GM23248 (cell line): ENCODE measurements at regions of chr1 and their contacts with region 1.

Region 1: DNA sequence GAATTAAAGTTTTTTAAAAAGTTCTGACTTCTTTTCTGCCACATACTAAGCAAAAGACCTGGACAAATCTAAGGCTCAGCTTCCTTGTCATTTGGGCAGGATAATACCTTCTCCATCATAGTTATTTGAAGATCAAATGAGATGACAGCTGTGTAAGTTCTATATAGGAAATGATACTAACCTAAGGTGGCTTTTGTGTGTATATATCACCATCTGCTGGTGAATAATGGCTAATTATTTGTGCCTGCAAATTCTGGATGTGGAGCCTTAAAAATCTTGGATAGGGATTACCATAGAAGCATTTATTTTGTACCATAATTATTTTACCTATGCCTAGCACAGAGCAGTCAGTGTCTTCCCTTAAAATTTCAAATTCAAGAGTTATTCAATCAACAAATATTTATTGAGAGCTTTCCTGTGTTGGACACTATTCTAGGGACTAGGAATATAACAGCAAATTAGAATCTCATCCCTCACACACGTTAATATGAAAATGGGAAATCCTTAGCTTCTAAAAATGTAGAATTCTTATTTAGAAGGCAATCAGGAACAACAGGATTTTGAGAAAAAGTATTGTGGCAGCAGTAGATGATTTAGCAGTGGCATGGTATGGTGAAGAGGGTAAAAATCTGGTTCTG is 89.8 kb downstream of the TMEM200B start:
- DNase-seq: peak; percentile 67
- H3K4me3 ChIP-seq: no peak overlapping the region
- H3K27ac ChIP-seq: no peak overlapping the region
- H3K4me1 ChIP-seq: no peaks in the 10 kb centered on the region
- H3K27me3 ChIP-seq: no peaks in the 10 kb centered on the region

Region 2: GRCh38 chr1:28886731-28887418 is 147.1 kb before region 1 on chr1:
- in situ Hi-C with region 1: loop called (anchors 5 kb)
- DNase-seq: peak; percentile 71
- H3K4me3 ChIP-seq: peak overlapping the region; percentile 76
- H3K27ac ChIP-seq: no peak overlapping the region
- H3K4me1 ChIP-seq: peaks cover 5% of the 10 kb centered on the region; the same call in 1 of the 2 replicates
- H3K27me3 ChIP-seq: no peaks in the 10 kb centered on the region